ENCODE measurements at regions of chr13 and their contacts with region 1.

Region 1: GRCh38 chr13:95226932-95227695 is 74.1 kb downstream of the ABCC4 start:
- H3K4me3 Mint-ChIP-seq: peak overlapping the region; percentile 34
- H3K27ac Mint-ChIP-seq: peak overlapping the region; percentile 96
- H3K4me1 Mint-ChIP-seq: peaks cover 34% of the 10 kb centered on the region
- H3K27me3 Mint-ChIP-seq: no peaks in the 10 kb centered on the region

Region 2: GRCh38 chr13:94601446-94602431 is 625.4 kb before region 1 on chr13 and contains the start of gene GPR180:
- intact Hi-C with region 1: loop called (anchors 5 kb)
- H3K4me3 Mint-ChIP-seq: peak within 1 kb of the TSS; percentile 86
- H3K27ac Mint-ChIP-seq: peak within 1 kb of the TSS; percentile 73
- H3K4me1 Mint-ChIP-seq: peaks cover 18% of the 10 kb centered on the region
- H3K27me3 Mint-ChIP-seq: peaks cover 5% of the 10 kb centered on the region

Region 3: DNA sequence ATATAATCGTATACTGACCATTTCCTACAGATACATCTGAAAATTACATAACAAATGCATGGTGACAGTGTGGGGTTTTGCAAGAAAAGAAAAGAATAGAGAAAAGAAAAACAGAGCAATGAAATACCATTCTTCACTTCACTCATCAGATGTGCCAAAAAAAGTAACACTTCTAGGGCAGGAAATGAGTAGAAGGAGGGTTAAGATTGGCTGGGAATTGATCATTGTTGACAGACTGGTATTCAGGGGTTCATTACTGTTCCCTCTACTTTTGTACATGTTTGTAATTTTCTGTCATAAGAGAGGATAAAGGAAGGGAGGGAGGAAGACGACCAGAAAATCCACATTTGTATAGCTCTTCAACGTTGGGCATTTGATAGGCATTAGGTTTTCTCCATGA is 42.6 kb after region 1 on chr13:
- intact Hi-C with region 1: loop called (anchors 5 kb)
- H3K4me3 Mint-ChIP-seq: no peak overlapping the region
- H3K27ac Mint-ChIP-seq: no peak overlapping the region
- H3K4me1 Mint-ChIP-seq: peaks cover 42% of the 10 kb centered on the region
- H3K27me3 Mint-ChIP-seq: no peaks in the 10 kb centered on the region

Region 4: DNA sequence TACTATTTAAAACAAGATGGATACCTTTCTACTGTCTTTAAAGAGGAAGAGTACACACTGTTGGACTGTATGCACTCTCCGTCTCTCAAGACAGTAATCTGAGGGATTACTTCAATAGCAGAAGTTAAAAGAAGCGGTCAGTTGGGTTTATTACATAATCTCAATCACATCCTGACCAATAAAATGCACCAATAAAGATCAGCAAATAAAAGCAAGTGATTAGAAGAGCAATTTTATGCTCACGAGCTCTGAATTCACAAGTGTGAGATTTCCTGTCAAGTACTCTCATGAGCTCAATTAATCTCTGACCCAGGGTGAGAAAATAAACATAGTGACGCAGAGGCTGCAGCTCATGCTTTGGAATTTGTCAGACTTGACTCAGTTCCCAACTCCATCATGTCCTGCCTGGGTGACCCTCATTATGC is 61.9 kb after region 1 on chr13:
- intact Hi-C with region 1: loop called (anchors 5 kb)
- H3K4me3 Mint-ChIP-seq: no peak overlapping the region
- H3K27ac Mint-ChIP-seq: no peak overlapping the region
- H3K4me1 Mint-ChIP-seq: peaks cover 50% of the 10 kb centered on the region
- H3K27me3 Mint-ChIP-seq: no peaks in the 10 kb centered on the region